ENCODE measurements at regions of chr20 and their contacts with region 1.

Region 1: GRCh38 chr20:53623454-53624211 is 30.0 kb upstream of the ZNF217 start:
- DNase-seq: peak; percentile 61

Region 2: GRCh38 chr20:53238121-53238660 is 385.4 kb before region 1 on chr20:
- CTCF ChIA-PET with region 1: no interaction called
- POLR2A ChIA-PET with region 1: no interaction called
- DNase-seq: no peak

Region 3: DNA sequence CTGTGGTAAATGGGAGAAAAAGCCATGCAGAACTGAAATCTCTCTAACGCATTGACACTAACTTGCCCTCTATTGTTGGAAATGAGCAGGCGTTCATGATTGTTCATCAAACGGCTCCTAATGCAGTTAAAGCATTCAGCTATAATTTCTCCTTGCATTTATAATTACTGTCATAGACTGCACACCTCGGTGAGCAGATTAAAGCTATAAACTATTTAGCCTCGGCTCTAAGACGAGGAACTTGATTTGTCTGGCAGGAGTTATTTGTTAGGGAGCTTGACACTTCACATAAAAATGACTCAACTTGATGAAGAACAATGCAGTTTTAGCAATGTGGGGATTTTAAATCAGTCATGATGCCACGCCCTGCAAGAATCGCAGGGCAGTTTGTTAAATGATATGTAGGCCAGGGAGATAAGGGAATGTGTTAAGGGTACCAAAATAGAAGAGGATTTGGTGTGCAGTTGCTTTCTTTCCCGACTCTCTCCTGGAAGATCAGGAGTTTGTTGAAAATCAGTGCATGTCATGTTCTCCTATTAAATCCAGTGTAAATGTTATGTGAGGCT is 361.3 kb before region 1 on chr20:
- CTCF ChIA-PET with region 1: no interaction called
- POLR2A ChIA-PET with region 1: no interaction called
- DNase-seq: no peak

Region 4: DNA sequence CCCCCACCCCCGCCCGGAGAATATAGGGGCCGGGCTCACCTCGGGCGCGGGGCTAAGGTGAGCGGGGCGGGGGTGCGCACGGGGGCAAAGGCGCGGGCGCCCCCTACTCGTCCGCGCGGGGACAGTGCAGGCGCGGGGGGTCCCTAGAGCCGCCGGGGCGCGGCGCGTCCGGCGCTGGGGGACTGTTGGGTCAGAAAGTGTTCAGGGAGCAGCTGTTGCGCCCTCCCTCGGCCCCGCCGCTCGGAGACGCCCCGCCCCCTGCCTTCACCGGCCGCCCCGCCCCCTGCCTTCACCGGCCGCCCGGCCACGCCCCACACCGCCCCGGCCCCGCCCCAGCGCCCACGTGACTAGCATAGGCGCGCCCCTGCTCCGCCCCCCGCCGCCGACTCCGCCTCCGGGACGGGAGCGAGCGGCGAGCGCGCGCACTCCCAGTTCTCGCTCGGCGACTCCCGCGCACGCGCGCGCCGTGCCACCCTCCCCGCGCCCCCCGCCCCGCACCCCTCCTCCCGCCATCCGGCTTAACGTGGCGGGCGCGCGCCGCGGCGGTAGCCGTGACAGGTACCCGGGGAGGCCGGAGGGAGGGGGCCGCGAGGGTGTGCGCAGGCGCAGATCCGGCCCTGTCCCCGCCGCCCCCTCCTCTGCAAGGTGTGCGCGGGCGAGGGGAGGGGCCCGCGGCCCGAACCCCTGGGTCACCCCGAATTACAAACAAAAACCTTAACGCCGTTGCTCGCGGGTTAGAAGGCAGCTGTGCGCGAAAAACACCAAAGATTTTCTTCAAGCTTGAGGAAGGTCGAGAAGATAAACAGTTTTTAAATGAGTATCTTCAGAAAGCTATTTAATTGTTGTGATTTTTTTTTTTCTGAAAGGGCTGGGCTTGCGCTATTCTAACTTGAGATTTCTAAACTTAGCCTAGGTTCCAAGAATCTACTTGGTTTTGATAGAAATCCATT is 29.3 kb before region 1 on chr20:
- CTCF ChIA-PET with region 1: no interaction called
- POLR2A ChIA-PET with region 1: interaction called, 10 read pairs
- DNase-seq: peak; percentile 80

Region 5: DNA sequence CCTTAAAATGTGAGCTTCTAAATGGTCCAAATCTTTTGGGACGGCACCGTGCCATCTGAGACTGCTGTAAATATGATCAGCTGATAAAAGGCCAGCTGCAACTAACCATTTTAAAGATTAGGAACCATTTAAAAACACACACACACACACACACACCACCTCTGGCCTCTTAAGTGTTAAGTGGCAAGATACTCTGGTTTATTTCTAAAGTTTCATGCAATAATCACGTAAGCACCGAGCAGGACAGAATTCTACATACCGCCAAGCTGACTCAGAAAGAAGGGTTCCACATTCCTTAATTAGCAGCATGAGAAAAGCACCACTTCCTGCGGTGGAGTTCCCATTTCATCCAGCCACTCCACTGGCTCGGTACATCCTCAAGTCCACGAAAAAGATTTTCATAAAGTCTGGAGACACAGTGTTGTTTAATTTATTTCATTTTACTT is 12.2 kb before region 1 on chr20:
- CTCF ChIA-PET with region 1: interaction called, 3 read pairs
- POLR2A ChIA-PET with region 1: interaction called, 42 read pairs
- DNase-seq: peak; percentile 26

Region 6: GRCh38 chr20:53738039-53738944 is 114.7 kb after region 1 on chr20:
- CTCF ChIA-PET with region 1: interaction called, 3 read pairs
- POLR2A ChIA-PET with region 1: interaction called, 10 read pairs
- DNase-seq: peak; percentile 67

Measured in HEK293T (cell line).